ENCODE measurements at regions of chr1 and their contacts with region 1.

Region 1: GRCh38 chr1:167442124-167442848 is 76.0 kb downstream of the CD247 start:
- DNase-seq: peak in 1 of 2 experiments; percentile 92
- H3K4me3 ChIP-seq: no peak overlapping the region
- H3K27ac ChIP-seq: no peak overlapping the region
- H3K4me1 ChIP-seq: peaks cover 2 to 8% (median 4%) of the 10 kb centered on the region in 4 experiments; a peak in 6 of 7 replicates
- H3K27me3 ChIP-seq: peaks cover 3 to 35% (median 26%) of the 10 kb centered on the region in 4 experiments
- CTCF ChIP-seq: peak; percentile 91 to 97 (median 96)
- EP300 ChIP-seq: no peak
- POLR2A ChIP-seq: no peak
- RAD21 ChIP-seq: peak; percentile 98 to 100

Region 2: DNA sequence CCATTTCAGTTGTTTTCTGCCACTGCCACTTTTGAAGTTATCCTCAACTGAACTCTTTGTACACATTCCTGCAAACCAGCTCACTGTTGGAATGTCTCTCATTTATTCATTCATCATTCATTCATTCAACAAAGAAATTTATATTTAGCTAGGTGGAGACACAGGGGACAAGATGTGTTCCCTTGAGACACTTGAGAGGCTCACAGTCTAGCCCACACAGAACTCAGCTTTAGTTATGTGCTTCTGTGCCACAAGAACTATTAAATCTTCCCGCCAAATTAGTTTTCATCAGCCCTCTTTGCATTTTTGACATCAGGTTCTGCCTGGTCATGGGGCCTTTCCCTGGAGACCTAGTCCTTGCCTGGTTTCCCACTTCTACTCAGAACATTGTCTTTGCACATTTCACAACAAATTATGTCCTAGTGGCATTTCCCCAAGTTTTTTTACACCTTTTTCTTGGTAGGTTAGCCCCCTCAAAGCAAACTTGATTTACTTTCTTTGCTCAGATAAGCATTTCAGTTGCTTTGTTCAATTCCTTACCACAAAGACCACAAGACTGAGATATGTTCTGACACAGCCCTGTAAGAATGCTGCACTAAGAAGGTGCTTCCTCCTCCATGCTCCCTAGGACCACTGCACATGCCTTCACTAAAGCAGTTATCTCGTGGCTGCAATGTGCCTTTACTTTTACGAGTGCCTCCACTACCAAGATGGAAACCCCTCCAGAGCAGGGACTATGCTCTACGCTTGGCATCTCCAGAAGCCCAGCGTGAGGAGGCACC is 497.9 kb before region 1 on chr1:
- CTCF ChIA-PET with region 1: no interaction called
- POLR2A ChIA-PET with region 1: no interaction called
- DNase-seq: no peak
- H3K4me3 ChIP-seq: no peak overlapping the region
- H3K27ac ChIP-seq: no peak overlapping the region
- H3K4me1 ChIP-seq: peaks cover 0 to 3% (median under 1%) of the 10 kb centered on the region in 4 experiments; a peak in 2 of 7 replicates
- H3K27me3 ChIP-seq: peaks cover 2 to 21% (median 17%) of the 10 kb centered on the region in 4 experiments
- CTCF ChIP-seq: no peak
- EP300 ChIP-seq: no peak
- POLR2A ChIP-seq: no peak
- RAD21 ChIP-seq: no peak

Region 3: DNA sequence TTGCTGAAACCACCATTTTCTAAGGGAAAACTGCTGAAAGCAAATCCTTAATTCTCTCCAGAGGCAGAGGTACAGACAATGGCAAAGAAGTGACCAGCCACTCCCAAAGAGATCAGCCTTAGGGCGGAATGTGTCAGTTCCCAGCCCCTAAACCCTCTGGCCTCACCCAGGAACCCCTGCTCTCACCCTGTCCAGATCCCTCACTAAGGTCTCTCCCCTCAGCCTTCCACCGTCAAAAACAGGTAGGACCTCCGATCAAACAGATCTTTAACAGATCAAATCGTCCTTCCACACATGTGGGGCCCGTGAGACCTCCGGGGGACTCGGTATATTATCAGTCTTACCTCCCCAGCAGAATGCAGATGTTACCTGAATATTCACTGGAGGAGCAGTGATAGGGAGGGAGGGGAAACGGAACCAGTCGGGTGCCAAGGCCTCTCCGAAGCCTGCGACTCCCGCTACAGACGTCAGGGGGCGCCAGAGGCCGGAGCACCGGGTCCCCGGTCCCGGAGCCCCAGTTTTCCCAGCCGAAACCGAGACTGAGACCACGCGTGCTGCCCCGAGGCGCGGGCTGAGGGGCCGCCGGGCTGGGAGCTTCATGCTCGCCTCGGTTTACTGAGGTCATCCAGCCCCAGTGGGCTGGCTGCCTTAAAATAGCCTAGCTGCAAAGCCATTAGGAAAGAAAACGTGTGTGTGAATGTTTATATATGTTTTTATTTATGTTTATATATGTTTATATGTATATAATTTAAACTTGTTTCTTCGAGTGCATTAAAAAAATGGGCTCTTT is 375.8 kb before region 1 on chr1:
- CTCF ChIA-PET with region 1: interaction called, 11 read pairs
- POLR2A ChIA-PET with region 1: no interaction called
- DNase-seq: peak; percentile 29 to 97
- H3K4me3 ChIP-seq: peak overlapping the region in 2 of 4 experiments; percentile 14 to 44; a peak in 4 of 8 replicates
- H3K27ac ChIP-seq: no peak overlapping the region
- H3K4me1 ChIP-seq: peaks cover 0 to 2% (median 0%) of the 10 kb centered on the region in 4 experiments; a peak in 1 of 7 replicates
- H3K27me3 ChIP-seq: no peaks in the 10 kb centered on the region
- CTCF ChIP-seq: peak; percentile 84 to 94 (median 93)
- EP300 ChIP-seq: no peak
- POLR2A ChIP-seq: no peak
- RAD21 ChIP-seq: peak; percentile 97 to 100

Region 4: GRCh38 chr1:167270349-167271092 is 171.8 kb before region 1 on chr1:
- CTCF ChIA-PET with region 1: interaction called, 33 read pairs
- POLR2A ChIA-PET with region 1: no interaction called
- DNase-seq: no peak
- H3K4me3 ChIP-seq: no peak overlapping the region
- H3K27ac ChIP-seq: no peak overlapping the region
- H3K4me1 ChIP-seq: peaks cover 0 to 17% (median 11%) of the 10 kb centered on the region in 4 experiments; a peak in 5 of 7 replicates
- H3K27me3 ChIP-seq: no peaks in the 10 kb centered on the region
- CTCF ChIP-seq: no peak
- EP300 ChIP-seq: no peak
- POLR2A ChIP-seq: no peak
- RAD21 ChIP-seq: no peak

Region 5: DNA sequence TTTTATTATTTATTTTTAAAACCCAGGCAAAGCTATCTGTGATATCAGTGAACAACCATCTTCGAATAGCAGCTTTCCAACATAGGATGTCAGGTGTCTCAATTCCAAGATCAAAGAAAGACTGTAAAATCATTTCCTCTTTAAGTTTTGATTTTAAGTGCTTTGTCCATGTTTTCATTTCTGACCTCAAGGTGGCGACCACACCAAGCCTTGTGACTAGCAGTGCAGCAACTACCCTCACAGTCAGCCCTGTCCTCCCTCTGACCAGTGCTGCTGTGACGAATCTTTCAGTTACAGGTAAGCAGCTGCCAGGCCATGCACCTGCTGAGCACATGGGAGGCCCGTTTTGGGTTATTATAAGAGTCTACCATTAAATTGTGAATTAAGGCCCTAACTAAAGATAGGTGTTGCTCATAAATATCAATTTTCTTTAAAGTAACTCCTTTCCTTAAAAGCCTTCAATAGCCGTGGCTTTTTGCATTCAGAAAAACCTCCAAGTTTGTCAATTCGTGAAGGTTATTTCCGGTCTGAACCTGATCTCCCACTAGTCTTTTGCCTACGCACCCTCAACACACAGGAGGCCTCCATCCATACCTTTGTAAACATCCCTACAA is 40.9 kb before region 1 on chr1:
- CTCF ChIA-PET with region 1: interaction called, 47 read pairs
- POLR2A ChIA-PET with region 1: no interaction called
- DNase-seq: no peak
- H3K4me3 ChIP-seq: no peak overlapping the region
- H3K27ac ChIP-seq: no peak overlapping the region
- H3K4me1 ChIP-seq: no peaks in the 10 kb centered on the region
- H3K27me3 ChIP-seq: no peaks in the 10 kb centered on the region
- CTCF ChIP-seq: peak; percentile 65 to 75 (median 68)
- EP300 ChIP-seq: no peak
- POLR2A ChIP-seq: no peak
- RAD21 ChIP-seq: peak; percentile 81 to 84

Region 6: DNA sequence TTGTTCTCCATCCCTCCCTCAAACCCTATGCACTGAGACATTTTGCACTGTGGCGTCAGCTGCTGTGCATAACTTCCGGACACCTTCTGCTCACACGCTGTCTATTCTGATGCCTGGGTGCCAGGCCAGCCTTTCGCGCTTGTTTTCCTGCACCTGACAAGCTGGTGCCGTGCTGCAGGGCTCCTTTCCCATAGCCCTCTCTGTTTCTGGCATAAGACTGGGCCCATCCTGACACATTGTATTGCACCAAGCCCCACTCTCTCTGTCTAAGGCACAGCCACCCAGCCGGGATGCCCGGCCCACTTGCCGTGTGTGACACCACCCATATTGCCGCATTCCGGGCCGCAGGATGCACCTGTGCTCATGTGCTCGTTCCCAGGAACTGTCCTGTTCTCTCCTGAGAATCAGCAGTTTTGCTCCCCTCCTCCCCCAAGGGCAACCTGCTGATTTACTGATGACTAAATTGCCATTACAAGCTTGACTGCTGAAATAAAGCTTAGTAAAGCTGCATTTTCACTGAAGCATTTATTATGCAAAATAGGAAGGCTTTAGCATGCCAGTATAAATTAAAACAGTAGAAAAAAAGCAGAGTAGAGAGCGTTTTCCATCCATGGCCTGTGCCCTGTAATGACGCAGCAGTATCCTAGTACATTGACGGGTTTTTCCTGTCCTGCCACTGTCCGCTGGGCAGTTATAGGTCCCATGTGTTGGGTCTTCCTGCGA is 12.0 kb before region 1 on chr1:
- CTCF ChIA-PET with region 1: interaction called, 64 read pairs
- POLR2A ChIA-PET with region 1: interaction called, 5 read pairs
- DNase-seq: peak; percentile 61 to 68
- H3K4me3 ChIP-seq: no peak overlapping the region
- H3K27ac ChIP-seq: no peak overlapping the region
- H3K4me1 ChIP-seq: peaks cover 20 to 47% (median 28%) of the 10 kb centered on the region in 4 experiments
- H3K27me3 ChIP-seq: peaks cover 0 to under 1% (median 0%) of the 10 kb centered on the region in 4 experiments; a peak in 1 of 7 replicates
- CTCF ChIP-seq: no peak
- EP300 ChIP-seq: 0 out of 3 replicates have a peak, but pooled peaks of 1 of the 2 experiments have one; percentile 21
- POLR2A ChIP-seq: no peak
- RAD21 ChIP-seq: no peak

Region 7: DNA sequence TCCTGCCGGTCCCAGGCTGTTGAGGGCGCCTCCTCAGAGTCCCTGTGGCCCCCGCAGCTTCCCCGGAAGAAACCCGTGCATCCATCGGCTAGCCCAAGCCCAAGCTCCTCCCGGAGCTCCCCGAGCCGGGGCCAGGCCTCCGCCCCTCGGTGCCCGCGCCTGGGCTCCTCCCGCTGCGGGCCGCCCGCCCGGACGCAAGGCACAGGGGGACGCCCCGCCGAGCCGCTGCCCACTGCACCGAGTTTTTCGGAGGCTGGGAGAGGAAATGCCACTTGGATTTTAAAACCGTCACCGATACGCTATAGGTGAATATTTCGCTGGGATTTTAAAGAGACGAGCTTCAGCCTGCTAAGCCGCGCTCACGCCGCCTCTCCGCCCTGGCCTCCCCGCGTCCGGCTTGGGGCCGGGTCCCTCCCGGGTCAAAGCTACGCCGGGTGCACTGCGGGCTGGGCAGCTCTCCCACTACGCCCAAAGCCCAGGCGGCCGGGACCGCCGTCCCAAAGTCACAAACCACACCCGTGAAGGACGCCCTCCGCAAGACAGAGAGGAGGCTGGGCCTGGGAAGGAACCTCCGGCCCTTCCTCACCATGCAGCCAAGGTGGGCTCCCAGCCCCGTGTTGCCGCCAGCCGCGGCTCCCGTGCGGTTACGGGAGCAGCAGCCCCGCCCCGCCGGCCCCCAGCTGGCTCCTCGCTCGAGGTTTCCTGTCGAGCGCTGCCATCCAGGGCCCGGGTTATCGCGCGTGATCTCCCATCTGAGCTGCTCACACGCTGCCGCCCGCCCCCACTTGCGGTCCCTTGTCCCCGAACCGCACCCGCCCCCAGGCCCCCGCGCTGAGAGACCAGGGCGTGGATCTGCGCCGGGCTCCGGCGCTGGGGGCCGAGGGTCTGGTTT is 12.9 kb after region 1 on chr1:
- CTCF ChIA-PET with region 1: interaction called, 46 read pairs
- POLR2A ChIA-PET with region 1: no interaction called
- DNase-seq: peak in 1 of 2 experiments; percentile 79
- H3K4me3 ChIP-seq: peak overlapping the region; percentile 61 to 67 (median 64)
- H3K27ac ChIP-seq: no peak overlapping the region
- H3K4me1 ChIP-seq: peaks cover 0 to 15% (median 4%) of the 10 kb centered on the region in 4 experiments; a peak in 6 of 7 replicates
- H3K27me3 ChIP-seq: peaks cover 0 to 28% (median 24%) of the 10 kb centered on the region in 4 experiments; a peak in 6 of 7 replicates
- CTCF ChIP-seq: no peak
- EP300 ChIP-seq: no peak
- POLR2A ChIP-seq: no peak
- RAD21 ChIP-seq: peak in 1 of 2 experiments; percentile 2; a peak in 1 of 4 replicates

Region 8: DNA sequence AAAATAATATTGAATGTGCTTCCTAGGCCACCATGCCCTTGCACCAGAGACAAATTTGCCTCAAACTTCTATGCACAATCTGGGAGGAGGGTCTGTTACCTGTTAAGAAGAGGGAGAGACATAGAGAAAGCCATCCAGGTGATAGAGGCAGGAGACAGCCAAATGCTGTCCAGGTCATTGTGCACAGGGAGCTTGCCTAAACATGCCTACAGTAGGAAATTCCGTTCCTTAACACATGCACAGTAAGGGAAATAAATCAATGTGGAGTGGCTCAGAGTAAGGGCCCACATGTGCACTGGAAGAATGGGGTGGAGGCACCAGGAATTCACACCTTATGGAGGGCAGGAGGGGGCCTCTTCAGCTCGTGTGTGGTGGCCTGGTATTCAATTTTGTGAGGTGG is 130.7 kb after region 1 on chr1:
- CTCF ChIA-PET with region 1: no interaction called
- POLR2A ChIA-PET with region 1: no interaction called
- DNase-seq: no peak
- H3K4me3 ChIP-seq: no peak overlapping the region
- H3K27ac ChIP-seq: no peak overlapping the region
- H3K4me1 ChIP-seq: no peaks in the 10 kb centered on the region
- H3K27me3 ChIP-seq: no peaks in the 10 kb centered on the region
- CTCF ChIP-seq: no peak
- EP300 ChIP-seq: no peak
- POLR2A ChIP-seq: no peak
- RAD21 ChIP-seq: no peak

Region 9: GRCh38 chr1:167681451-167682098 is 239.3 kb after region 1 on chr1:
- CTCF ChIA-PET with region 1: no interaction called
- POLR2A ChIA-PET with region 1: no interaction called
- DNase-seq: no peak
- H3K4me3 ChIP-seq: no peak overlapping the region
- H3K27ac ChIP-seq: no peak overlapping the region
- H3K4me1 ChIP-seq: peaks cover 2 to 8% (median 6%) of the 10 kb centered on the region in 4 experiments; a peak in 6 of 7 replicates
- H3K27me3 ChIP-seq: no peaks in the 10 kb centered on the region; a peak in 1 of 7 replicates
- CTCF ChIP-seq: no peak
- EP300 ChIP-seq: no peak
- POLR2A ChIP-seq: no peak
- RAD21 ChIP-seq: no peak

Measured in H1 (cell line).